ENCODE measurements at regions of chr9 and their contacts with region 1.

Region 1: GRCh38 chr9:103152473-103152872 is 157.3 kb downstream of the CYLC2 start:
- DNase-seq: no peak
- ATAC-seq: peak; percentile 78
- H3K4me3 Mint-ChIP-seq: no peak overlapping the region
- H3K27ac Mint-ChIP-seq: no peak overlapping the region
- H3K4me1 Mint-ChIP-seq: no peaks in the 10 kb centered on the region
- H3K27me3 Mint-ChIP-seq: no peaks in the 10 kb centered on the region
- CTCF ChIP-seq: no peak

Region 2: DNA sequence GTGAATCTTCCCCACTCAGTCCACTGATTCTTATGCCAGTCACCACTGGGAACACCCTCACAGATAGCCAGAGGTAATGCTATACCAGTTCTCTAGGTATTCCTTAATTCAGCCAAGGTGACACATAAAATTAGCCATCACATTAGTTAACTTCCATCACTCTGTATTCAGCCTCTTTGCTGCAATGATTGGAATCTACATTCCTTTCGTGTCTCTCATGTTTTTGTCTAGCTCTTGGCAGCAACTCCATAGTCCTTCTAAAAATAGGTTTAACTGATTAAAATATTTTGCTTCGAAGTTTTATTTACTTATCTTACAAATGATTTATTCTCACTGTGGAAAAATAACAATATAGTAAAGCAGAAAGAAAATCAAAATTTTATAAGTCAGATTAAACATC is 1638.4 kb before region 1 on chr9:
- CTCF ChIA-PET with region 1: no interaction called
- POLR2A ChIA-PET with region 1: no interaction called
- DNase-seq: no peak
- ATAC-seq: peak; percentile 9
- H3K4me3 Mint-ChIP-seq: no peak overlapping the region
- H3K27ac Mint-ChIP-seq: no peak overlapping the region
- H3K4me1 Mint-ChIP-seq: peaks cover 39% of the 10 kb centered on the region
- H3K27me3 Mint-ChIP-seq: no peaks in the 10 kb centered on the region
- CTCF ChIP-seq: no peak

Region 3: DNA sequence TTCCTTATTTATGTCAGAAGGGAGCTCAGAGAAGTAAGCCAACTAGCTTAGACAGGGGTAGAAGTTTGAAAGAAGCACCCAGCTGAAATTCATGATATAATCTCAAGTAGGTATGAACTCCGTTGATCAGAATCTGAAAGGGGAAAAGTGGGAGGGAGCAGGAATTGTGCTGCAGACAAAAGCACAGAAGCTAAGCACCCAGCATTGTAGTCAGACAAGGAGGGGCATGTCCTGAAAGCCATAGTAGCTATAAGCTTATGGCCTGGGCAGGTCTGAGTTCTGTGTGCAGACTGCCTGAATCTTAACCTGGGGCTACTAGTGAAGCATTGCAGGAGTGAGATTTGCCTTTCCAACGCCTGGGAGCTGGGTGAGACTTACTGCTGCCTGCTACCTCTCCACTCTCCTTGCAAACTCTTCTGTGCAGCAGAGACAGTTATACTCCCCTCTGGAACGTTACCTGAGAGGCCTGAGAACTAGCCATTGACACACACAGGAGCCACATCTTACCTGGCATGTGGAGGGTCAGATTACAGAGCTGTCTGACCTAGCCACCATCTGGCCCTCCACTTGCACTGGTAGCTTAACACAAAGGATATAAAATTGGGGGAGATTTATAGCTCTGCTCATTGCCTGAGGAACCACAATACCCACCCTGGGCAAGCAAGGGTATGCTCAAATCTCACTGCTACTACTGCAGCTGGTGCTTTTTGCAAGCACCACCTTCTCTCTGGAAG is 167.1 kb before region 1 on chr9:
- CTCF ChIA-PET with region 1: no interaction called
- POLR2A ChIA-PET with region 1: no interaction called
- DNase-seq: no peak
- ATAC-seq: peak; percentile 49
- H3K4me3 Mint-ChIP-seq: no peak overlapping the region
- H3K27ac Mint-ChIP-seq: no peak overlapping the region
- H3K4me1 Mint-ChIP-seq: peaks cover 21% of the 10 kb centered on the region
- H3K27me3 Mint-ChIP-seq: no peaks in the 10 kb centered on the region
- CTCF ChIP-seq: no peak

Region 4: GRCh38 chr9:103139891-103140290 is 12.6 kb before region 1 on chr9:
- CTCF ChIA-PET with region 1: no interaction called
- POLR2A ChIA-PET with region 1: no interaction called
- DNase-seq: no peak
- ATAC-seq: no peak
- H3K4me3 Mint-ChIP-seq: no peak overlapping the region
- H3K27ac Mint-ChIP-seq: no peak overlapping the region
- H3K4me1 Mint-ChIP-seq: no peaks in the 10 kb centered on the region
- H3K27me3 Mint-ChIP-seq: no peaks in the 10 kb centered on the region
- CTCF ChIP-seq: no peak

Region 5: GRCh38 chr9:103319979-103320378 is 167.5 kb after region 1 on chr9:
- CTCF ChIA-PET with region 1: interaction called, 13 read pairs
- POLR2A ChIA-PET with region 1: no interaction called
- DNase-seq: no peak
- ATAC-seq: no peak
- H3K4me3 Mint-ChIP-seq: no peak overlapping the region
- H3K27ac Mint-ChIP-seq: no peak overlapping the region
- H3K4me1 Mint-ChIP-seq: no peaks in the 10 kb centered on the region
- H3K27me3 Mint-ChIP-seq: no peaks in the 10 kb centered on the region
- CTCF ChIP-seq: peak; percentile 7; the same call in 1 of the 2 replicates

Measured in WTC11 (cell line).